ENCODE measurements at regions of chr18 and their contacts with region 1.

Region 1: GRCh38 chr18:3585656-3586509 is 135.9 kb downstream of the TGIF1 start:
- DNase-seq: peak; percentile 80
- ATAC-seq: peak; percentile 95
- H3K4me3 Mint-ChIP-seq: no peak overlapping the region
- H3K27ac Mint-ChIP-seq: no peak overlapping the region
- H3K4me1 Mint-ChIP-seq: peaks cover 28% of the 10 kb centered on the region
- H3K27me3 Mint-ChIP-seq: no peaks in the 10 kb centered on the region

Region 2: GRCh38 chr18:3281456-3282400 is 304.2 kb before region 1 on chr18:
- CTCF ChIA-PET with region 1: interaction called, 28 read pairs
- POLR2A ChIA-PET with region 1: no interaction called
- DNase-seq: no peak
- ATAC-seq: peak; percentile 82
- H3K4me3 Mint-ChIP-seq: no peak overlapping the region
- H3K27ac Mint-ChIP-seq: no peak overlapping the region
- H3K4me1 Mint-ChIP-seq: no peaks in the 10 kb centered on the region
- H3K27me3 Mint-ChIP-seq: peaks cover 5% of the 10 kb centered on the region

Region 3: DNA sequence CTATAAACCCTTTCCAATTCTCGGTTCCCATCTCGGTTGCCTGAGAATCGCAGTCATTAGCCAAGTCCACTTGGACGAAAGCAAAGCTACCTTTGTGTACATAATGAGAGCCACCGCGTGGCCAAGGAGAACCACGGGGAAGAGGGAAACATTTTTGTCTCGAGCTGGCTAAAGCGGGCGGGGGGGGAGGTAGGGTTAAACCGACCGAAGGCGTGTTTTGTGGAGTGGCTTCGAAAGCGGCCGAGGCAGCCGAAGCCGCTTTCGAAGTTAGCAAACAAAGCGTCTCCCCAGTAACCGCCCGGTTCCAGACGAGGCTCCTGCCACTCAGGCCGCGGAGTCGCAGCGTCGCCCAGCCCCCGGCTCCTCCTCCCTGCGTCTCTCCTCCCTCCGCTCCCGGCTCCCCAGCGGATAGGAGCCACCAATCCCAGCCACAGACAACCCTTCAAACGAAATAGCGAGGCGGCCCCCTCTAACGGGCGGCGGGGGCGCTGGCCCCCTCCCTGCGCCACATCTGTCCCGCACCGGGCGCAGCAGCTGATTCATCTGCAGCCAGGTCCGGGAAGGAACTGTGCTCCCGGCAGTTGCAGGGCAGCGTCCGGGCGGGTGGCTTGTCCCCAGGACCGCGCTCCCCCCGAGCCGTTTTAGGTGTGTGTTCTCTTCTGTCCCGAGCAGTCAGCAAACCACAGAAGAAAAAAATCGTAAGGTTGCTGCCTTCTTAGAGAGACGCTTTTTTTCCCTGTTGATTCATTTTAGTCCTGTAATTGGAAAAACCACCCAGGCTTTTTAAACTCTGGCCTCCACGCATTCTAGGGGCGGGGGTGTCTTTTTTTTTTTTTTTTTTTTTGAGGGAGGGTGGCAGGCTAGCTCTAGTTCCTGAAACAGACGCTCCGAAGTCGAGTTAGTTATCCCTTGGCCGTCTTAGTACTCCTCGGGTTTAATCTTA is 137.7 kb before region 1 on chr18:
- CTCF ChIA-PET with region 1: interaction called, 54 read pairs
- POLR2A ChIA-PET with region 1: interaction called, 4 read pairs
- DNase-seq: peak; percentile 90
- ATAC-seq: peak; percentile 72
- H3K4me3 Mint-ChIP-seq: peak overlapping the region; percentile 95
- H3K27ac Mint-ChIP-seq: peak overlapping the region; percentile 93
- H3K4me1 Mint-ChIP-seq: peaks cover 25% of the 10 kb centered on the region
- H3K27me3 Mint-ChIP-seq: peaks cover under 1% of the 10 kb centered on the region

Region 4: GRCh38 chr18:3472681-3473544 is 113.0 kb before region 1 on chr18:
- CTCF ChIA-PET with region 1: interaction called, 16 read pairs
- POLR2A ChIA-PET with region 1: no interaction called
- DNase-seq: no peak
- ATAC-seq: no peak
- H3K4me3 Mint-ChIP-seq: no peak overlapping the region
- H3K27ac Mint-ChIP-seq: no peak overlapping the region
- H3K4me1 Mint-ChIP-seq: peaks cover 10% of the 10 kb centered on the region
- H3K27me3 Mint-ChIP-seq: no peaks in the 10 kb centered on the region

Region 5: GRCh38 chr18:3604498-3605408 is 18.9 kb after region 1 on chr18:
- CTCF ChIA-PET with region 1: interaction called, 14 read pairs
- POLR2A ChIA-PET with region 1: interaction called, 4 read pairs
- DNase-seq: peak; percentile 52
- ATAC-seq: peak; percentile 71
- H3K4me3 Mint-ChIP-seq: no peak overlapping the region
- H3K27ac Mint-ChIP-seq: no peak overlapping the region
- H3K4me1 Mint-ChIP-seq: peaks cover 27% of the 10 kb centered on the region
- H3K27me3 Mint-ChIP-seq: no peaks in the 10 kb centered on the region

Measured in activated CD8-positive, alpha-beta T cell treated with anti-CD3 and anti-CD28 coated beads, Interleukin-2, amount 10 ng/mL, durations not matched to agents 7 days and 5 days (primary cell).